ENCODE measurements at regions of chr2 and their contacts with region 1.

Region 1: DNA sequence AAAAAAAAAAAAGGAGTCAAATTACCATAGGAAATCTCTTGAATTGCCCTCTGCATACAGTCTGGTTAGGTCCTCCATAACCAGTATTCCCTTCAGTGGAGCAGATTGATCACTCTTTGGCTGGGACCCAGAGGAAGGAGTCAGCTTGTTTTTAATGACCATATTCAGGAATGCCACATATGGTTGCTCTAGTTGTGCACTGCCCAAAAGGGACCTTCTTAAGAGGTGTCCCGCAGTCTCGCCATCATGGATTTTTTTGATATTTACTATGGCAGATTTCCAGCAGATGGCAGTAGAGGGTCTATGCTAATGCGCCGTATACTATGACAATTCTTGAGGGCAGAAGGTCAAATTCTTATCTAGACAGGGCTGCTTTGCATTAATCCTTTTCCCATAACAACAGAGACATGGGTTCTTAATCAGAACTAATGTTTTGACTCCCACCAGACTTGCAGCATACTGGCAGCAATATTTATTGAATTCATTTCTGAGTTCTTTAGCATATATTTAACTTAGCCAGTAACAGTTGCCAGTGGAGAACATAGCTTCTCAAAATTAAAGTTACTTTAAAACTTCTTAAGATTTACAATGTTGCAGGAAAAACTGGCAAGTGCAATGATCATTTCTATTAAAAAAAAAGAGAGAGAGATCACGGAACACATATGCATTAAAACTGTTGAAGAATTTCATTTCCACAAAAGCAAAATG is 31.8 kb upstream of the INPP4A start:
- DNase-seq: peak; percentile 69
- ATAC-seq: peak; percentile 83
- H3K4me3 Mint-ChIP-seq: no peak overlapping the region
- H3K27ac Mint-ChIP-seq: no peak overlapping the region
- H3K4me1 Mint-ChIP-seq: peaks cover 21% of the 10 kb centered on the region
- H3K27me3 Mint-ChIP-seq: no peaks in the 10 kb centered on the region
- CTCF ChIP-seq: peak; percentile 84

Region 2: DNA sequence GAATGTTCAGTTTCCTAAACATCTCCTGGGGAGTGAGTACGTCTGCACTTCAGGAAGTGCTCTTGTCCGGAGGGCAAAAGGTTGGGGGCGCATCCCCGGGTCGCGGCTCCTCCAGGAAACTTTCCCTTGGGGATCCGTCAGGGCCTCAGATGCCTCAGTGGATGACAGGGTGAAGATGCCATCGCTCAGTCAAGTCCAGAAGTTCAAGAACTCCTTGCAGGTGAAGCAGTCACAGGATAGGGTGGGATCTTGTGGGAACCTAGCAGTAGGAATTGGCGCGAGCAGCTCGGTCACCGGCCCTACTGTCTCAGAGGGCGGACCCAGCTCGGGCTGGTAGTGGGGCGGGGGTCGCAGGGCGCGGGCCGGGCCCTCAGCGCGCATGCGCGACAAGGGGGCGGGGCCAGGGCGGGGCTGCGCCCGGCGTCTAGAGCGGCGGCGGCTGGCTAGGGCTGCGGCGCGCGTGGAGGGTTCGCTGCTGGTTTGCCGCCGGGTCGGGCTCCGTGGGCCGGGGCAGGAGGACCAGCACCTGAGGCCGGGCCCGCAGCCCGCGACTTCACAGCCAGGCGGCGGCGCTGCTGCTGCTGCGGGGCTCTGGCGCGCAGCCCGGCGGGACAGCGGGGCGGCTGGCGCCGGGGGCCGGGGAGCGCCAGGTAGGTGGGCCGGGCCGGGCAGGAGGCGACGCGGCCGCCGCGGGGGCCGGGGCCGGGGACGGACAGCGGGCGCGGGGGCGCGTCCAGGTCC is 31.7 kb after region 1 on chr2 and contains the start of gene INPP4A:
- CTCF ChIA-PET with region 1: interaction called, 10 read pairs
- POLR2A ChIA-PET with region 1: interaction called, 4 read pairs
- intact Hi-C with region 1: no loop called
- DNase-seq: peak; percentile 73
- ATAC-seq: peak; percentile 73
- H3K4me3 Mint-ChIP-seq: peak within 1 kb of the TSS; percentile 81
- H3K27ac Mint-ChIP-seq: peak within 1 kb of the TSS; percentile 90
- H3K4me1 Mint-ChIP-seq: peaks cover 34% of the 10 kb centered on the region
- H3K27me3 Mint-ChIP-seq: no peaks in the 10 kb centered on the region
- CTCF ChIP-seq: no peak
- total RNA-seq, gene INPP4A: 46.7 to 46.9 TPM

Region 3: GRCh38 chr2:98465456-98466226 is 52.7 kb after region 1 on chr2:
- CTCF ChIA-PET with region 1: interaction called, 21 read pairs
- POLR2A ChIA-PET with region 1: no interaction called
- intact Hi-C with region 1: loop called (anchors 5 kb)
- DNase-seq: peak; percentile 81
- ATAC-seq: peak; percentile 11
- H3K4me3 Mint-ChIP-seq: peak overlapping the region; percentile 69
- H3K27ac Mint-ChIP-seq: peak overlapping the region; percentile 97
- H3K4me1 Mint-ChIP-seq: peaks cover 87% of the 10 kb centered on the region
- H3K27me3 Mint-ChIP-seq: no peaks in the 10 kb centered on the region
- CTCF ChIP-seq: no peak

Region 4: DNA sequence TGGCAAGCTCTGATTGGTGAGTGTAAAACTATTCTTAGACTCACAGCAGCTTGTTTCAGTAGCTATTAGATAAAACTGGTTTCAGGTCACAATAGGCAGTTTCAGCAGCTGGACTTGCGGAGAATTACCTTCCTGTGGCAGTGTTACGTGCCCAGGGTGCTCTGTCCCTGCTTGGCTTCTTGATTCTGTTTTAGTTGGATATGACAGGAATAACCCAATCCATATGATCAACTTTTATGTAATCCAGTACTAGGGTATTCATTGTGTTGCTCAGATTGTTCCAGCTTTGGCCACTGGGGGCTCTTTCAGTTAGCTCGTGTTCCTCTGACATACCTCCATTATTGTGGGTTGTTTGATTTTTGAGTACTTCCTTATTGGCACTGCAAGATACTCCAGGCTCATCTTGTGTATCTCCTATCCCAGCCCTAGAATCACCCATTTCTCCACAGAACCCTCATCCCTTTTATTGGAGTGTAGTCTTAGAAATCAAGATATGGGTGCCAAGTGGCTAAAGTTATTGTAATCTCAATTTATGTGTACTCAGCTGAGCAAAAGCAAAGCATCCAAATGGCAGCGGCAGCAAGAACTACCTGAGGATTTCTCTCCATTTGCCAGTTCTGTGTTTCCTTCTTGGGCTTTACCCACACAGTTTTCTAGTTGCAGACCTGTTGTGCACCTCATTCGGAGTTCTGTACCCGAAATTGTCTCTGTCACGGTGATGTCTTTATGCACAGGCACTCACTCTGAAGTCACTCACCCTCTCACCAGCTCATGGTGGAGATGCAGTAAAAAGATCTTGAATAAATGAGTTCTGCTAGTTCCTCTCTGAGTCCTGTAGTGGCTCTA is 75.1 kb after region 1 on chr2:
- CTCF ChIA-PET with region 1: interaction called, 18 read pairs
- POLR2A ChIA-PET with region 1: no interaction called
- intact Hi-C with region 1: no loop called
- DNase-seq: peak; percentile 78
- ATAC-seq: peak; percentile 52
- H3K4me3 Mint-ChIP-seq: no peak overlapping the region
- H3K27ac Mint-ChIP-seq: peak overlapping the region; percentile 60
- H3K4me1 Mint-ChIP-seq: peaks cover 97% of the 10 kb centered on the region
- H3K27me3 Mint-ChIP-seq: no peaks in the 10 kb centered on the region
- CTCF ChIP-seq: peak; percentile 79

Region 5: DNA sequence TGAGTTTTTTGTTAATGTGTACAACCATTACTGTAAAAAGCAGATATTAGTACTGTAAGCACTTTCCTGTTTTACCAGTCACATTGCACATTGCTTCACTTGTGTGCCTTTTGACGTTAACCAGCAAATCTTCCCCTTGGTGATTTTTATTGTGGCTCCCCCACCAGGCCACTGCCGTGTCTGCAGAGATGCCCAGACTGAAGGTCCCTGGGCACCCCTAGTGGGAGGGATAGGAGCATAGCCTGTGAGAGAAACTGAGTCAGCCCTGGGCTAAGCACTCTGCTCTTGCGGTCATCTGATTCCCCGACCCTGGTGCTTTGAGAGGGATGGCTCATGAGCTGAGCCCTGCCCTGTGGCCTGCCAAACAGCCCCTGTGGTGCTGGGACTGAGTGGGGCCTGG is 105.2 kb after region 1 on chr2:
- CTCF ChIA-PET with region 1: interaction called, 50 read pairs
- POLR2A ChIA-PET with region 1: interaction called, 3 read pairs
- intact Hi-C with region 1: loop called (anchors 2 kb)
- DNase-seq: peak; percentile 71
- ATAC-seq: peak; percentile 76
- H3K4me3 Mint-ChIP-seq: no peak overlapping the region
- H3K27ac Mint-ChIP-seq: no peak overlapping the region
- H3K4me1 Mint-ChIP-seq: peaks cover 58% of the 10 kb centered on the region
- H3K27me3 Mint-ChIP-seq: no peaks in the 10 kb centered on the region
- CTCF ChIP-seq: peak; percentile 77

Region 6: GRCh38 chr2:98560256-98560771 is 147.4 kb after region 1 on chr2:
- CTCF ChIA-PET with region 1: interaction called, 21 read pairs
- POLR2A ChIA-PET with region 1: no interaction called
- intact Hi-C with region 1: no loop called
- DNase-seq: no peak
- ATAC-seq: no peak
- H3K4me3 Mint-ChIP-seq: no peak overlapping the region
- H3K27ac Mint-ChIP-seq: peak overlapping the region; percentile 66
- H3K4me1 Mint-ChIP-seq: peaks cover 49% of the 10 kb centered on the region
- H3K27me3 Mint-ChIP-seq: no peaks in the 10 kb centered on the region
- CTCF ChIP-seq: no peak

Region 7: DNA sequence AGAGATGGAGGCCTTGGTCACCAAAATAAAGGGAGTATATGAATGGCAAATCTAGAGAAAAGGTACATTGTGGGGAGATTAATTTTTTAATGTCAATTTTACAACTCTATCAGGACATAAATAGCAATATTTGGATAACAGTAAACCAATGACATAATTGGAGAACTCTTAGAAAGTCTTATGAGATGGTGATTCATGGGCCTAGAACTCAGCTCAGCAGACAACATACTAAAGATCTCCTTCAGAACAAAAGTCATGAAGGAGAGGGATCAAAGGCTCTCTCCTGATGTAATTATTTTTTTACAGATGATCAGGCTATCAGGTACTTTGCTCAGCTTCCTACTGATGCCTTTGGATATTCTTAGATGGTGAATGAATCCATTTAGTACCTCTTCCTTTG is 433.1 kb after region 1 on chr2:
- CTCF ChIA-PET with region 1: no interaction called
- POLR2A ChIA-PET with region 1: no interaction called
- intact Hi-C with region 1: loop called (anchors 10 kb)
- DNase-seq: no peak
- ATAC-seq: no peak
- H3K4me3 Mint-ChIP-seq: no peak overlapping the region
- H3K27ac Mint-ChIP-seq: no peak overlapping the region
- H3K4me1 Mint-ChIP-seq: no peaks in the 10 kb centered on the region
- H3K27me3 Mint-ChIP-seq: no peaks in the 10 kb centered on the region
- CTCF ChIP-seq: no peak

Measured in activated CD8-positive, alpha-beta T cell treated with anti-CD3 and anti-CD28 coated beads for 36 hours (primary cell).